ENCODE measurements at regions of chr14 and their contacts with region 1.

Region 1: GRCh38 chr14:106547735-106548434 is 1021.5 kb downstream of the TMEM121 start:
- DNase-seq: no peak
- H3K4me3 Mint-ChIP-seq: no peak overlapping the region
- H3K27ac Mint-ChIP-seq: peak overlapping the region; percentile 11
- H3K4me1 Mint-ChIP-seq: peaks cover 12% of the 10 kb centered on the region
- H3K27me3 Mint-ChIP-seq: peaks cover 24% of the 10 kb centered on the region

Region 2: GRCh38 chr14:106062502-106063272 is 485.2 kb before region 1 on chr14:
- CTCF ChIA-PET with region 1: no interaction called
- POLR2A ChIA-PET with region 1: no interaction called
- intact Hi-C with region 1: no loop called
- DNase-seq: no peak
- H3K4me3 Mint-ChIP-seq: no peak overlapping the region
- H3K27ac Mint-ChIP-seq: no peak overlapping the region
- H3K4me1 Mint-ChIP-seq: peaks cover 28% of the 10 kb centered on the region
- H3K27me3 Mint-ChIP-seq: peaks cover 44% of the 10 kb centered on the region

Region 3: DNA sequence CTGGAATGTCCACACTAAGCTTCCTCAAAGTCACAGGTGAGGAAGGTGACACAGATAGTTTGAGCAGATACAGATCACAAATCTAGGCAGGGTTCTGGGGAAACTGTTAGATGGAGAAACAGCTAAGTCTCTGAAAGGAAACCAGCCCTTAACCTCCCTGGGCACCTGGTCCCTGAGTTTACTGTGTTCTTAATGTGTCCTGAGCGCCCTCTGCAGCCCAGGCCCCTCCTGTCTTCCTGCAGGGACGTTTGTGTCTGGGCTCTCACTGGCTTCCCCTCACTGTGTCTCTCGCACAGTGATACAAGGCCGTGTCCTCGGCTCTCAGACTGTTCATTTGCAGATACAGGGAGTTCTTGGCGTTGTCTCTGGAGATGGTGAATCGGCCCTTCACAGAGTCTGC is 337.2 kb before region 1 on chr14:
- CTCF ChIA-PET with region 1: no interaction called
- POLR2A ChIA-PET with region 1: no interaction called
- intact Hi-C with region 1: no loop called
- DNase-seq: peak; percentile 60
- H3K4me3 Mint-ChIP-seq: no peak overlapping the region
- H3K27ac Mint-ChIP-seq: no peak overlapping the region
- H3K4me1 Mint-ChIP-seq: peaks cover 17% of the 10 kb centered on the region
- H3K27me3 Mint-ChIP-seq: peaks cover 4% of the 10 kb centered on the region

Region 4: GRCh38 chr14:106491851-106492250 is 56.0 kb before region 1 on chr14:
- CTCF ChIA-PET with region 1: no interaction called
- POLR2A ChIA-PET with region 1: no interaction called
- intact Hi-C with region 1: no loop called
- DNase-seq: peak; percentile 50
- H3K4me3 Mint-ChIP-seq: no peak overlapping the region
- H3K27ac Mint-ChIP-seq: no peak overlapping the region
- H3K4me1 Mint-ChIP-seq: peaks cover 21% of the 10 kb centered on the region
- H3K27me3 Mint-ChIP-seq: no peaks in the 10 kb centered on the region

Region 5: GRCh38 chr14:106586098-106586704 is 38.3 kb after region 1 on chr14:
- CTCF ChIA-PET with region 1: no interaction called
- POLR2A ChIA-PET with region 1: no interaction called
- intact Hi-C with region 1: no loop called
- DNase-seq: peak; percentile 80
- H3K4me3 Mint-ChIP-seq: no peak overlapping the region
- H3K27ac Mint-ChIP-seq: no peak overlapping the region
- H3K4me1 Mint-ChIP-seq: no peaks in the 10 kb centered on the region
- H3K27me3 Mint-ChIP-seq: peaks cover 11% of the 10 kb centered on the region

Region 6: GRCh38 chr14:106613256-106613655 is 65.4 kb after region 1 on chr14:
- CTCF ChIA-PET with region 1: interaction called, 7 read pairs
- POLR2A ChIA-PET with region 1: no interaction called
- intact Hi-C with region 1: loop called (anchors 2 kb)
- DNase-seq: no peak
- H3K4me3 Mint-ChIP-seq: no peak overlapping the region
- H3K27ac Mint-ChIP-seq: no peak overlapping the region
- H3K4me1 Mint-ChIP-seq: peaks cover 4% of the 10 kb centered on the region
- H3K27me3 Mint-ChIP-seq: peaks cover 23% of the 10 kb centered on the region

Measured in activated CD4-positive, alpha-beta memory T cell treated with anti-CD3 and anti-CD28 coated beads for 36 hours (primary cell).